Activated naive CD4-positive, alpha-beta T cell treated with anti-CD3 and anti-CD28 coated beads for 36 hours (primary cell): ENCODE measurements at regions of chr6 and their contacts with region 1.

Region 1: GRCh38 chr6:25889877-25890853 is 16.1 kb upstream of the SLC17A3 start:
- DNase-seq: peak; percentile 33
- H3K4me3 Mint-ChIP-seq: no peak overlapping the region
- H3K27ac Mint-ChIP-seq: no peak overlapping the region
- H3K4me1 Mint-ChIP-seq: no peaks in the 10 kb centered on the region
- H3K27me3 Mint-ChIP-seq: peaks cover 2% of the 10 kb centered on the region

Region 2: DNA sequence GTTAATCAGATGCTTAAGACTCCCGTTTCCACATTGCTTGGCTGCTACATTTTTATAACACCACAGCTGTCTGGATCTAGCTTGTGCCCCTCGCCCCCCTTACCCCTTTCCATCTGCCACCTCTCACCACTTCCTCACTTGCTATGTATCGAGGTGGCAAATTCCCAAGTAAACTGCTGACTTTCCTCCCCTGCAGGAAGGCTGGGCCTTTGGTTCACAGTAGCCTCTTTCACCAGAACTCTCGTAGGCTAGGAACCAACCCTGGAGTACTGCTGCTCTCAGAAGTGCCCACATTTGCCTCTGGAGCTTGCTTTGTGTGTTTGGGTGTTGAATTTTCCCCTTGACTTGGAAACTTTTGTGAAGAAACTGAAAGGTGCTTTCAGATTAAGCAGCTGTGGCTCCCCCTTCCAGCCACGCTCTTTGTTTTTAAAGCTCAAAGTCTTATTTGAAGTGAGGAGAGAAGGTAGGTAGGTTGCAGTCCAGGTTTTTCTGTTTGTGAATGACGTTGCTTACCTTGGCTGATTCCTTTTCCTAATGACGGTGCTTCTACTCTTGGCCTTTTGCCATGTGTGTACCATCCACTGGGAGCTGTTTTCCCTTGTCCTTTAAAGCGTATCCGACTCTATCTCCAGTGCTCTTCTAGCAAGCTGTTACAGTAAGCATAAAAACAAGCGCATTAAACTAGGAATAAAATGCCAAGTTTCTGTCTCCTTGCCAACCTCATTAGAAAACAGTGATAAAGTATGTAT is 520.6 kb before region 1 on chr6:
- CTCF ChIA-PET with region 1: no interaction called
- intact Hi-C with region 1: no loop called
- DNase-seq: peak; percentile 57
- H3K4me3 Mint-ChIP-seq: peak overlapping the region; percentile 51
- H3K27ac Mint-ChIP-seq: peak overlapping the region; percentile 74
- H3K4me1 Mint-ChIP-seq: peaks cover 75% of the 10 kb centered on the region
- H3K27me3 Mint-ChIP-seq: no peaks in the 10 kb centered on the region

Region 3: GRCh38 chr6:25717866-25718740 is 172.1 kb before region 1 on chr6:
- CTCF ChIA-PET with region 1: interaction called, 4 read pairs
- intact Hi-C with region 1: loop called (anchors 1 kb)
- DNase-seq: no peak
- H3K4me3 Mint-ChIP-seq: no peak overlapping the region
- H3K27ac Mint-ChIP-seq: no peak overlapping the region
- H3K4me1 Mint-ChIP-seq: no peaks in the 10 kb centered on the region
- H3K27me3 Mint-ChIP-seq: peaks cover 9% of the 10 kb centered on the region